ENCODE measurements at regions of chr14 and their contacts with region 1.

Region 1: DNA sequence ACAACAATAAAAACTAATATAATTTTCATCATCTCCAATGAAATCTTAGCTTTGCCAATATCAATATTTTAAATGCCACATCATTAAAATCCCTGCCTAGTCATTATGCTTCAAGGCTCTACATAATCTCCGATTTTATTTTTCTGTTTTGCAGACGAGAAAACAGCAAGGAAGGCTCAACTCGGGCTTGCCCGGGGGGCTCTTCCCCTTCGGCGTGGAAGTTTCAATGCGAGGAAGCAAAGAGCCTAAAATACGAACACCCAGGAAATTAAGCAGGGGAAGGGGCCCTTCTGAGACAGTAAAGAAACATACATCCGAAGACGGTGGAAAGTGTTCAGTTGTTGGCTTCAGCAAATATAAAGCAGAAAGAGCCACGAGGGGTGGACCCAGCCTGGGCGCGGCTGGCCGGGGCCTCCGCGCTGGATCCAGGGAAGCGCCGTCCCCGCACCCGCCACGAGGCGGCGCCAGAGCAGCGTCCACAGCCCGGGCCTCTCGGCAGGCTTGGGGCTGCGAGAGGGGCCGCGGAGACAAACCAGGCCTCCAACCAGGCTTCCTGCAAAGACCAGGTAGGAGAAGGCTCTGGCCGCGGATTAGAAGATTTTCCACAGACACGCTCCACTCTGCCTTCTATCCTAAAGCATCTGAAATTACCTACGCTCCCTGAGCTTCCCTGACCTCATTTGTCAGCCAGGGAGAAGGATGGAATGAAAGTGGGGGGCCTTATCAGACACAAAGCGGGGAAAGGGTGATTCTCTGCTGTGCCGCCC is 77.2 kb downstream of the SERPINA3 start:
- DNase-seq: peak; percentile 33
- H3K4me3 ChIP-seq: peak overlapping the region in 1 of 3 experiments; percentile 47
- H3K27ac ChIP-seq: no peak overlapping the region
- H3K4me1 ChIP-seq: no peaks in the 10 kb centered on the region
- H3K27me3 ChIP-seq: peaks cover 0 to 2% of the 10 kb centered on the region in 2 experiments
- CTCF ChIP-seq: peak; percentile 95 to 98
- POLR2A ChIP-seq: no peak

Region 2: DNA sequence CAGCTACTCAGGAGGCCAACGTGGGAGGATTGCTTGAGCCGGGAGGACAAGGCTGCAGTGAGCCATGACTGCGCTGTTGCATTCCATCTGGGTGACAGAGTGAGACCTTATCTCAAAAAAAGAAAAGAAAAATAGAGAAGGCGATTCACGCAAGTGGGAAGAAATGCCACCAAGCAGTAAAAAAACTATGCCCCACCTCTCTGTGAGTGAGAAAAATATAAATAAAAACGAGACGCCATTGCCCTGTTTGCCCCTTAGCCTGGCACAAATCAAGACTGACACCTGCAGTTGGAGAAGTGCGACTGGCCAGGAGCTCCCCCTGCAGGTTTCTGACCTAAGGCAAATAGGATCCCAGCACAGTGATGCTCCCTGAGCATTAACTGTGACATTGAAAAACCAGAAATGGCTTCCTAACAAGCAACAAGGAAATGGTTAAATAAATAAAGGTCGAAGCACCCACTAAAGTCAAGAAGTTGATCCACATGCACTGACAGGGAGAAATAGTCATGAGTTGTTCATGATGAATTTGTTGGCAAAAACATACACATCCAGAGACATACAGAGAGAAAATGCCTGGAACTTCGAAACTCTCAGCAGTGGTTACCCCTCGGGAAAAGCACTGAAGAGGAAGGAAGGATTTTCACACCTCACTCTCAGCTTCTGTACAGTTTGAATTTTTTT is 59.4 kb after region 1 on chr14:
- CTCF ChIA-PET with region 1: interaction called, 4 read pairs
- POLR2A ChIA-PET with region 1: no interaction called
- dilution Hi-C with region 1: no loop called
- intact Hi-C with region 1: loop called (anchors 1 kb)
- DNase-seq: no peak
- H3K4me3 ChIP-seq: no peak overlapping the region
- H3K27ac ChIP-seq: no peak overlapping the region
- H3K4me1 ChIP-seq: no peaks in the 10 kb centered on the region
- H3K27me3 ChIP-seq: no peaks in the 10 kb centered on the region
- CTCF ChIP-seq: peak; percentile 16 to 34
- POLR2A ChIP-seq: no peak

Region 3: GRCh38 chr14:95098984-95099599 is 409.7 kb after region 1 on chr14:
- CTCF ChIA-PET with region 1: interaction called, 4 read pairs
- POLR2A ChIA-PET with region 1: no interaction called
- dilution Hi-C with region 1: no loop called
- intact Hi-C with region 1: loop called (anchors 1 kb)
- DNase-seq: peak; percentile 25
- H3K4me3 ChIP-seq: no peak overlapping the region
- H3K27ac ChIP-seq: no peak overlapping the region
- H3K4me1 ChIP-seq: no peaks in the 10 kb centered on the region
- H3K27me3 ChIP-seq: no peaks in the 10 kb centered on the region
- CTCF ChIP-seq: peak; percentile 38 to 49
- POLR2A ChIP-seq: no peak

Region 4: GRCh38 chr14:95196290-95196689 is 506.9 kb after region 1 on chr14:
- CTCF ChIA-PET with region 1: no interaction called
- POLR2A ChIA-PET with region 1: no interaction called
- dilution Hi-C with region 1: no loop called
- intact Hi-C with region 1: loop called (anchors 1 kb)
- DNase-seq: no peak
- H3K4me3 ChIP-seq: no peak overlapping the region
- H3K27ac ChIP-seq: no peak overlapping the region
- H3K4me1 ChIP-seq: peaks cover under 1% of the 10 kb centered on the region
- H3K27me3 ChIP-seq: no peaks in the 10 kb centered on the region
- CTCF ChIP-seq: peak in 1 of 2 donors; percentile 19
- POLR2A ChIP-seq: no peak

Region 5: DNA sequence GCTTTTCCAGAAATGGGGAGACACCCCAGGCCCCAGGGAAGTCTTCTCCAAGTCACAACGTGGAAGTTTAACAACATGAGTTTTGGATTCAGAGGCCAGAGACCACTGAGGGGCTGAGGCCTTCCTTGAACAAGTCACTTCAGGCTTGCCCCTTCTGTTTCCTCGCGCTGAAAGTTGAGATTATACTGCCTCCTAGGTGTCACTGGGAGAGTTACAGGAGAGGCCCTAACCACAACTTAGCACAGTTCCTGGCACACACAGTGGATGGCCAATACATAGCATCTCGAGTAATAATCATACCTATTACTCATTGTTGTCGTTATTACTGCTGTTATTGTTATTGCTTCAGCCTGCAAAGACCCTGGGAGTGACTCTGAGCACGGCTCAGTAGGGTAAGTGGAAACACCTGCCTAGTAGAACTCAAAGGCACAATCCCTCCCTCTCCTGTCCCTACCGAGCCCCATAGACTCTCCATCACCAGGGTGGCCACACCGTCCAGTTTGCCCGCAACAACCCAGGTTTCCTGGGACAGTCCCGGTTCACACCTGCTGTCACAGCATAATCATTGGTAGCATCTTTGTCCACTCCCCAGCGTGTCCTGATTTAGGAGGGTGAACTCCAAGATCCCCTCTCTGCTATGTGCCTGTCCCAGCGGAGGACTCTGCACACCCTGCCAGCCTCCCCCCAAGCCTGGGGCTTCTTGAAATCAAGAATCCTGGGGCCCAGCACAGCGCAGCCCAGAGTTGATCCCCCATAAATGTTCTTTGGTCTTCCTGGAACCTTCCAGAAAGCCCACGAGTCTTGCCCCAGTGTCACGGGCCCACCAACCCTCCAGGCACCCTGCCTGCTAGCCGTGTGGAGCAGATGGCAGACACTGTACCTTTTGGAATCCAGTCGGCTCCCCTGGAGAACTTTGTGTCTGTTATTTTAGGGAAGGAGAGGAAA is 742.1 kb after region 1 on chr14:
- CTCF ChIA-PET with region 1: interaction called, 69 read pairs
- POLR2A ChIA-PET with region 1: no interaction called
- dilution Hi-C with region 1: no loop called
- intact Hi-C with region 1: loop called (anchors 1 kb)
- DNase-seq: peak; percentile 27
- H3K4me3 ChIP-seq: no peak overlapping the region
- H3K27ac ChIP-seq: no peak overlapping the region
- H3K4me1 ChIP-seq: no peaks in the 10 kb centered on the region
- H3K27me3 ChIP-seq: no peaks in the 10 kb centered on the region
- CTCF ChIP-seq: peak; percentile 40 to 50
- POLR2A ChIP-seq: no peak

Measured in endothelial cell of umbilical vein (primary cell).